ENCODE measurements at regions of chr5 and their contacts with region 1.

Region 1: DNA sequence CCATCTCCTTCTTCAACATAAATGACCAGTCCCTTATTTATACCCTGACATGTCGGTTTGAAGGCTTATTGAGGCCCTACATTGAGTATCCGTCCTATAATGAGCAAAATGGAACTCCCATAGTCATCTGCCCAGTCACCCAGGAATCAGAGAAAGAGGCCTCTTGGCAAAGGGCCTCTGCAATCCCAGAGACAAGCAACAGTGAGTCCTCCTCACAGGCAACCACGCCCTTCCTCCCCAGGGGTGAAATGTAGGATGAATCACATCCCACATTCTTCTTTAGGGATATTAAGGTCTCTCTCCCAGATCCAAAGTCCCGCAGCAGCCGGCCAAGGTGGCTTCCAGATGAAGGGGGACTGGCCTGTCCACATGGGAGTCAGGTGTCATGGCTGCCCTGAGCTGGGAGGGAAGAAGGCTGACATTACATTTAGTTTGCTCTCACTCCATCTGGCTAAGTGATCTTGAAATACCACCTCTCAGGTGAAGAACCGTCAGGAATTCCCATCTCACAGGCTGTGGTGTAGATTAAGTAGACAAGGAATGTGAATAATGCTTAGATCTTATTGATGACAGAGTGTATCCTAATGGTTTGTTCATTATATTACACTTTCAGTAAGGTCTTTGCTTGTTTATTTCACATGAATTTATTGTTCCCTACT is 38.2 kb upstream of the BTNL3 start:
- DNase-seq: no peak
- CTCF ChIP-seq: no peak

Region 2: DNA sequence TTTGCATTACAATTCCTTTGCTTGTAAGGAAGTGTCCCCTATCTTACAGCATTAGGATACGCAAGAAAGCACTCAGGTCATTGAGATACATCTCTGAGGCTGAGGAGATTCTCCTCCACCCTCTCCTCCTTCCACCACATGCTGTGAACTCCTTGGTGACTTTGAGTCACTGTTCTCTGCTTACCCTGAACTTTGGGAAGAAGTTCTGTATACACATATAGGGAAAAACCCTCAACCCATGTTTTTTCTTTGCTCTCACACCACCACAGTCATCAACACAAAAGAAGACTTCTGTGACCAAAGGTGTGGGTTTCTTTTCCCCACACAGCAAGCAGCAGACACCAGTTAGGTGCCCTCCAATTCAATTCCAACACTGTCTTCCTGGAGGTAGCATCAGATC is 418.2 kb before region 1 on chr5:
- in situ Hi-C with region 1: no loop called
- DNase-seq: no peak
- CTCF ChIP-seq: no peak

Region 3: DNA sequence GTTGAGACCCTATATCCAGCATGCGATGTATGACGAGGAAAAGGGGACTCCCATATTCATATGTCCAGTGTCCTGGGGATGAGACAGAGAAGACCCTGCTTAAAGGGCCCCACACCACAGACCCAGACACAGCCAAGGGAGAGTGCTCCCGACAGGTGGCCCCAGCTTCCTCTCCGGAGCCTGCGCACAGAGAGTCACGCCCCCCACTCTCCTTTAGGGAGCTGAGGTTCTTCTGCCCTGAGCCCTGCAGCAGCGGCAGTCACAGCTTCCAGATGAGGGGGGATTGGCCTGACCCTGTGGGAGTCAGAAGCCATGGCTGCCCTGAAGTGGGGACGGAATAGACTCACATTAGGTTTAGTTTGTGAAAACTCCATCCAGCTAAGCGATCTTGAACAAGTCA is 55.4 kb after region 1 on chr5:
- in situ Hi-C with region 1: loop called (anchors 10 kb)
- DNase-seq: no peak
- CTCF ChIP-seq: no peak

Measured in GM13976 (cell line).